Prostate gland (tissue), 2 donors: ENCODE measurements at regions of chr18 and their contacts with region 1.

Region 1: GRCh38 chr18:77000527-77000926 is 132.1 kb downstream of the MBP start:
- DNase-seq: peak; percentile 30
- H3K4me3 ChIP-seq: no peak overlapping the region
- H3K27ac ChIP-seq: no peak overlapping the region
- H3K4me1 ChIP-seq: no peaks in the 10 kb centered on the region
- H3K27me3 ChIP-seq: no peaks in the 10 kb centered on the region
- CTCF ChIP-seq: peak; percentile 92 to 93 (median 93)
- POLR2A ChIP-seq: no peak

Region 2: DNA sequence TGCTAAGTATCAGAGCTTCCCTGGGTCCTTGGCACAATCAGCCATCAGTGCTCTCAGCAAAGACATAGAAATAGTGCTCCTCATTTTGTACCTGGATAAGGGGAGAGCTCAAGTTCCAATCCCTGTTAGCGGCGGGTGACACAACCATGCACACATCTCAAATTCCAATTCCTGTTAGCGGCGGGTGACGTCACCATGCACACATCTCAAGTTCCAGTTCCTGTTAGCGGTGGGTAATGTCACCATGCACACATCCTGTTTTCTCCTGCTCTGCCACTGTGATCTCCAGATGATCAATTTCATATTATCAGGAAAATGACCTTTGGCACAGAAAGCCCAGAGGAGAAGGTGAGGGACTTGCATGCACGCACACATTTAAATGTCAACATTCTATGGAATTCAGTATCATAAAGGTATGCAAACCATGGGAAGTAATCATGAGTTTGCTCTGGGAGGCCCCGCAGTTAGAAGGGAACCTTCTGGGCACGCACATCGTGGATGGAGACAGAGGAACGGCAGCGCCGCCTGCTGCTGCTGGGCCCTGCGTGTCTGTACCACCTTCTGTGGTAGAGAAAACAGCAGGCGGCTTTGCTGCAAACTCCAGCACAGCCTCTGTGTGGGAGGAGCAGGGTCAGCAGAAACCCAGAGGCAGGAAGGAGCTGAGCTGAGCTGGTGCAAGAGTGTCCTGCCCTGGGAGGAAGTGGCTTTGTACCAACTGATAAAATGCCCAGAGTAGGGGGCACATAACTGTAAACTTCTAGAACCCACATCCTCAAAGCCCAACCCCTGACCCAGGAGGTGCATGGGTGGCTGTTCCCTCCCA is 54.3 kb after region 1 on chr18:
- intact Hi-C with region 1: loop called (anchors 5 kb)
- DNase-seq: peak; percentile 42
- H3K4me3 ChIP-seq: no peak overlapping the region
- H3K27ac ChIP-seq: peak overlapping the region; percentile 29 to 60
- H3K4me1 ChIP-seq: no peaks in the 10 kb centered on the region
- H3K27me3 ChIP-seq: no peaks in the 10 kb centered on the region
- CTCF ChIP-seq: peak in 3 of 4 experiments; percentile 32 to 51 (median 45)
- POLR2A ChIP-seq: no peak

Region 3: DNA sequence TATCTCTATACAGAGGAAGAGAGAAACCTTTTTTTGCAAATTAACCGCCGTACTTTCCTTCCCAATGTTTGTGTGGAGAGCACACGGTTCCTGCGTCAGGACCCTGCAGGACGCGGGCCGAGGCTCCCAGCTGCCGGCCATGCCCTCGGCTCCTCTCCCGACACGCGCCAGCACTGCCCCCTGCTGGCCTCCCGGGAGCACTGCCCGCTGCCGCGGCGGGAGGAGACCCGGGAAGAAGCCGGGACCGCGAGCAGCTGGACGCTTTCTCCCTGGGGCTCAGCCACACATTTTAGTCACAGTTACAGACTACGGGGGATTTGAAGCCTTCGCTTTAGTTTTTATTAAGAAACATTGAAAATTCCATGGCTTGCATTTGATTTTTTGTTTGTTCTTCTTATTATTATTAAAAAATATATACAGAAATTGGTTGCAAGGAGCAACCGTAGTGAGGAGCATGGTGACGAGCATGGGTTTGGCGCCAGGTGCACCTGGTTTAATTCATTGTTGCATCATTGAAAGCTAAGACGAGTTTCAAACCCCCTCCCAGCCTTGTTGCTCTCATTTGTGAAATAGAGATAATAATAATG is 650.4 kb after region 1 on chr18:
- intact Hi-C with region 1: loop called (anchors 5 kb)
- DNase-seq: peak; percentile 27
- H3K4me3 ChIP-seq: no peak overlapping the region
- H3K27ac ChIP-seq: no peak overlapping the region
- H3K4me1 ChIP-seq: no peaks in the 10 kb centered on the region
- H3K27me3 ChIP-seq: peaks cover 2% of the 10 kb centered on the region
- CTCF ChIP-seq: peak; percentile 60 to 86 (median 84)
- POLR2A ChIP-seq: no peak

Region 4: GRCh38 chr18:77811503-77811902 is 811.0 kb after region 1 on chr18:
- intact Hi-C with region 1: no loop called
- DNase-seq: no peak
- H3K4me3 ChIP-seq: no peak overlapping the region
- H3K27ac ChIP-seq: no peak overlapping the region
- H3K4me1 ChIP-seq: no peaks in the 10 kb centered on the region
- H3K27me3 ChIP-seq: no peaks in the 10 kb centered on the region
- CTCF ChIP-seq: no peak
- POLR2A ChIP-seq: no peak